ENCODE measurements at regions of chr15 and their contacts with region 1.

Region 1: DNA sequence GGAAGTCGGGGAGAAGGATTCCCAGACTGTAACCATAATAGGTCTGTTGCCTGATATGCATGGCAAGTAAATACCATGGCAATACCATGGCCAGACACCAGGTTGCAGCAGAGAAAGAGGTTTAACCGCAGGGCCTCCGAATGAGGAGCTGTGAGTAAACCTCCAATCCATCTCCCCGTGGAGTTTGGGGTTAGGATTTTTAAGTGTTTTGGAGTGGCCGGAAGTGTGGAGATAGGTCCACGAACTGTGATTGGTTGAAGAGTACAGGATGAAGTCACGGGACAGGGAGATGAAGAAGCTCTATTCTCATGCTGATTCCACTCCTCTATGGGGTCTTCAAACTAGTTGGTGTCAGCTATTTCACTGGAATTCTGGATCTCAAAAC is 127.9 kb downstream of the ST8SIA2 start:
- DNase-seq: peak; percentile 57 to 66
- H3K4me3 ChIP-seq: no peak overlapping the region
- H3K27ac ChIP-seq: no peak overlapping the region
- H3K4me1 ChIP-seq: no peaks in the 10 kb centered on the region
- H3K27me3 ChIP-seq: no peaks in the 10 kb centered on the region
- CTCF ChIP-seq: peak; percentile 77

Region 2: DNA sequence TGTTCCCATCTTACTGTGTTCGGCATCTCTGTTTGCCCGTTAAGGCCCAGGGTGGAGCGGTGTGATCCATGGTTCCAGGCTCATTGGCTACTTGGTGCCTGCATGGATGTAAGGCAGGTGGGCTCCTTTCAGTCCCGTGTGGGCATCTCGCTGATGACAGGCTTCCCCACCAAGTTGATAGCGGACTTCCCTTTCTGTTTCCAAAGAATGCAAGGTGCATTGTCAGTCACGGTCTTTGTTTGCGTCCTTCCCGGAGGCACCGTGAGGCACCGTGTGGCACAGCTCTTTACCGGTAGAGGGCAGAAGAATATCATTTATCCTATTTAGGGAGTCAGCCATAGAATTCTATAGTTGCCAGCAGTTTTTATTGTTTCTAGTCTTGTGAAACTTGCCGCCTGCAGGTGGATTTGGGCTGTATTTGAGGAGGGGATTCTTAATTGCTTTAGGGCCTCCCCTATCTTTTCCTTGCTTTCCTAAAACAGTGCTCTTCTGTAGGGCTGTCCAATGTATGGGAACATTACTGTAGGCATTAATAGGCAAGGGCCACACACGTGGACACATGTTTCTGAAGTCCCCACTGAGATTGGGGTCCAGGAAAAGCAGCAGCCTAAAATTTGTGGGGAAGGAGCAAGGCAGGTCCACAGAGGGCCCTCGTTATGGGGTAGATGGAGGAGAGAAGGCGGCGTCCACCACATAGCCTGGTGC is 424.0 kb before region 1 on chr15:
- CTCF ChIA-PET with region 1: no interaction called
- POLR2A ChIA-PET with region 1: no interaction called
- intact Hi-C with region 1: loop called (anchors 10 kb)
- DNase-seq: no peak
- H3K4me3 ChIP-seq: no peak overlapping the region
- H3K27ac ChIP-seq: no peak overlapping the region
- H3K4me1 ChIP-seq: no peaks in the 10 kb centered on the region
- H3K27me3 ChIP-seq: no peaks in the 10 kb centered on the region
- CTCF ChIP-seq: no peak

Region 3: DNA sequence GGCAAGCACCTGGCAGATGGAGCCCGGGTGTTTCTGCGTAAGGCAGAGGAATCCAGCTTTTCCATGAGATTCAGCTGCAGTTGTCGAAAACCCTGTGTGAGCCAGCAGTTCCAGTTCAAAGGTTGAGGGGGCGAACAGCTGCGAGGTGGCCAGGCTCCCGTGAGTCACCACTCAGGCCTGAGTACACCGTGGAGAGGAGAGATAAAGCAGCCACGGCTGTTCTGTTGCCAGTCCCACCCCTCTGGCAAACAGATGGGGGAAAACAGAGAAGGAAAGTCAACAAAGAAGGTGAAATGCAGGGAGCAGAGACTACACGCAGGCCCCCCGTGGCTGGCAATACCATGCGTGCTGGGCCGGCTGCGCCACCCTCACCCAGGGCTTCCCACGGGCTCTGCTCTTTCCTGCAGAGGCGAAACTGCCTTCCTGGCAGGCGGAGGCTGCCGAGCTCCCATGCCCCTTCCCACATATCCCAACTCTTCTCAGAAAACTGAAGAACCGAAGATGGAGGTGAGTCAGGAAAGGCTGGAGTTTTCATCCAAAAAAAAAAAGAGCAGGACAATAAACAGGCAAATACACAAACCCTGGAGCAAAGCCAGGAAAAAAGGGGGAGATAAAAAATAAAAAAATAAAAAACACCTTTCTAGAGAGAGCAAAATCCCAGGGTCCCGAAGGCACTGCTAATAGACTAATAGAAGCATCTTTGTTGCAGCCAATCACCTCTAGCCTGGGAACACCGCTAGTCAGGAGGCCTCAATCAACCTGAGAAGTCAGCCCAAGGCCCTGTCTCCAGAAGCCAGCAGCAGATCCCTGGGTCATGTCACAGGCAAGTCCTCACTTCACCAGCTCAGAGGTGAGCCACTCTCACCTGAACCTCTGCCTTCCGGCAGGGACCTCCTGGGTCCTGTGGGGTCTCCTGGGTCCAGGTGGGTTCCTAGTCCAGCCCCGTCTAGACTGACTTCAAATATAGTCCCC is 96.2 kb after region 1 on chr15:
- CTCF ChIA-PET with region 1: no interaction called
- POLR2A ChIA-PET with region 1: no interaction called
- intact Hi-C with region 1: loop called (anchors 10 kb)
- DNase-seq: peak; percentile 40 to 57
- H3K4me3 ChIP-seq: no peak overlapping the region
- H3K27ac ChIP-seq: 0 out of 2 replicates have a peak overlapping the region, but pooled peaks have one; percentile 11
- H3K4me1 ChIP-seq: no peaks in the 10 kb centered on the region; the same call in 1 of the 2 replicates
- H3K27me3 ChIP-seq: no peaks in the 10 kb centered on the region
- CTCF ChIP-seq: no peak

Region 4: DNA sequence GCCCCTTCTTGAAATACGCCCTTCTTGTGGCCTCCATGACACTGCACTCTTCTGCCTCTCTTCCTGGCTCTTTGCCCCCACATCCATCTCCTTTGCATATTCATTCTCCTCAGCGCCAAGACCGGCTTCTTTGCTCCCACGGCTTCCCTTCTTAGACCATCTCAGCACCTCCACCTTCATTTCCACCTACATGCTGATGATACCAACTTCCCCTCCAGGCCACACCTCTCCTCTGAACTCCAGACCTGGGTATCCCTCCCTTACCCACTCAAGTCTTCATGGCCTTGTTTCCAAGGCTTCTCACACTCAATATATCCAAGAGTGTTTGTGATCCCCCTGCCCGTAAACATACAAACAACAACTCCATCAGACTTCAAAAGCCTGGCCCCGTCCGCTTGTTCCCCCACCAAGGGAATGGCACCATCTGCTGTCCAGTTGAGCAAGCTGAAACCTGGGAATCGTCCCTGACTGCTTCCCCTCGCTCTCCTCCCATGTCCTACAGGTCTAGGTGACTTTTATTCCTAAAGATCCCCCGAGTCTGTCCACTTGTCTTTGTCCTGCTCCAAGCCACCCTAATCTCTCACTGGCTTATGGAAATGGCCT is 161.7 kb after region 1 on chr15:
- CTCF ChIA-PET with region 1: no interaction called
- POLR2A ChIA-PET with region 1: no interaction called
- intact Hi-C with region 1: loop called (anchors 10 kb)
- DNase-seq: no peak
- H3K4me3 ChIP-seq: no peak overlapping the region
- H3K27ac ChIP-seq: no peak overlapping the region
- H3K4me1 ChIP-seq: peaks cover 24% of the 10 kb centered on the region
- H3K27me3 ChIP-seq: no peaks in the 10 kb centered on the region
- CTCF ChIP-seq: peak; percentile 40; the same call in 1 of the 2 replicates

Region 5: GRCh38 chr15:92724144-92724543 is 202.5 kb after region 1 on chr15:
- CTCF ChIA-PET with region 1: no interaction called
- POLR2A ChIA-PET with region 1: no interaction called
- intact Hi-C with region 1: no loop called
- DNase-seq: no peak
- H3K4me3 ChIP-seq: no peak overlapping the region
- H3K27ac ChIP-seq: no peak overlapping the region
- H3K4me1 ChIP-seq: no peaks in the 10 kb centered on the region
- H3K27me3 ChIP-seq: no peaks in the 10 kb centered on the region
- CTCF ChIP-seq: no peak